Heart left ventricle (tissue), 16 donors: ENCODE measurements at regions of chr15 and their contacts with region 1.

Region 1: GRCh38 chr15:71448688-71449114 is 333.4 kb downstream of the THSD4 start:
- DNase-seq: peak in 2 of 5 donors; percentile 37 to 52
- ATAC-seq: peak; percentile 56 to 78 (median 64)
- H3K4me3 ChIP-seq: no peak overlapping the region
- H3K27ac ChIP-seq: peak overlapping the region in 11 of 12 donors; percentile 22 to 84 (median 57)
- H3K4me1 ChIP-seq: peaks cover 0 to 53% (median 12%) of the 10 kb centered on the region in 12 donors
- H3K27me3 ChIP-seq: no peaks in the 10 kb centered on the region
- CTCF ChIP-seq: peak; percentile 75 to 97 (median 92)
- POLR2A ChIP-seq: no peak

Region 2: DNA sequence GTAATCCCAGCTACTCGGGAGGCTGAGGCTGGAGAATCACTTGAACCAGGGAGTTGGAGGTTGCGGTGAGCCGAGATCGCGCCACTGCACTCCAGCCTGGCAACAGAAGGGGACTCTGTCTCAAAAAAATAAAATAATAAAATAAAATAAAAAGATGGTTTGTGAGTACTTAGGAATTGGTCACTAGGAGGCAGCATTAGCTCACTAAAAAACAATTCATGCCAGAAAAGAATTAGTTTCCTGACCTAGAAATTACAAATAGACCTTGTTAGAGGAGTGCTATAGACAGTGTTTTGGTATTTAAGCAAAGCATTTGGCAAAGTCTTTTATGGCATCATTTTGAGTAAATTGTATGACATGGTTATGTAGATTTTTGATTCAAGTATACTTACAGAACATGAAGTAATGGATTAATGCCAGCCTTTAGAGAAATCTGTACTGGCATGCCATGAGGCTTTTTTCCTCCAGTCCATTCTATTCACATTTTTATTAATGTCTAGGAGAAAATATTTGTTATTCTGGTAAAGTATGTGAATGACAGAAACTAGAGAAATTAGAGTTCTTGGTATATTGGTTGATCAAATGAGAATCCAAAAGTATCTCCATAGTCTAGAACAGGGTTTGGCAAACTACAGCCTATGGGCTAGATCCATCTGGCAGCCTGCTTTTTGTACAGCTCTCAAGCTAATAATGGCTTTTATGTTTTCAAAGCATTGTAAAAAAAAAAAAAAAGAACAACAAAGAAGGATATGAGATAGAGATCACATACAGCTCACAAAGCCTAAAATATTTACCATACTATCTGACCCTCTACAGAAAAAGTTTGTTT is 474.5 kb before region 1 on chr15:
- intact Hi-C with region 1: loop called in 1 of 10 experiments (anchors 10 kb)
- DNase-seq: no peak
- ATAC-seq: no peak
- H3K4me3 ChIP-seq: no peak overlapping the region
- H3K27ac ChIP-seq: no peak overlapping the region
- H3K4me1 ChIP-seq: no peaks in the 10 kb centered on the region
- H3K27me3 ChIP-seq: no peaks in the 10 kb centered on the region
- CTCF ChIP-seq: peak in 8 of 12 donors; percentile 6 to 45 (median 32)
- POLR2A ChIP-seq: no peak

Region 3: DNA sequence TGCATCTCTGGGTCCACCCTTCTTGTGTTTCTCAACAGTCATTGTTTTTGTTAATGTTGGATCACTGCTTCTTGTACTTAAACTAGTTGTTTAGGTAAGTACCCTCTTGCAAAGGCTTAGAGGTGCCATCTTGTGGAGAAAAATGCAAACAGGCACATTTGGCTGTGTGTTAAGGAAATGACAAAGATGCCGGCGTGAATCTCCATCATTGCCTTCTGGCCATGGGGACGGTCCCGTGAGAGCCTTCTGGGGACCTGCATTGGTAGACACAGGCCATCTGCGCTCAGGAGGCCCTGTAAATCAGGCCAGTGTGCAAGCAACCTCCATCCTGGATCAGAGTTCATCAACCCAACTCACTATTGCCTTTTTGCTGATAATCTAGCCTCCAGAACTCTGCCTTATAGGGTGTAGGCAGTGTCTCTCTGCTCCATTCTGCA is 203.1 kb after region 1 on chr15:
- intact Hi-C with region 1: loop called in 8 of 10 experiments (anchors 2 to 10 kb)
- DNase-seq: no peak
- ATAC-seq: peak in 1 of 4 donors; percentile 47
- H3K4me3 ChIP-seq: no peak overlapping the region
- H3K27ac ChIP-seq: peak overlapping the region in 1 of 12 donors; percentile 10
- H3K4me1 ChIP-seq: peaks cover 0 to 47% (median 13%) of the 10 kb centered on the region in 12 donors
- H3K27me3 ChIP-seq: no peaks in the 10 kb centered on the region
- CTCF ChIP-seq: peak in 10 of 12 donors; percentile 24 to 54 (median 41)
- POLR2A ChIP-seq: no peak

Region 4: DNA sequence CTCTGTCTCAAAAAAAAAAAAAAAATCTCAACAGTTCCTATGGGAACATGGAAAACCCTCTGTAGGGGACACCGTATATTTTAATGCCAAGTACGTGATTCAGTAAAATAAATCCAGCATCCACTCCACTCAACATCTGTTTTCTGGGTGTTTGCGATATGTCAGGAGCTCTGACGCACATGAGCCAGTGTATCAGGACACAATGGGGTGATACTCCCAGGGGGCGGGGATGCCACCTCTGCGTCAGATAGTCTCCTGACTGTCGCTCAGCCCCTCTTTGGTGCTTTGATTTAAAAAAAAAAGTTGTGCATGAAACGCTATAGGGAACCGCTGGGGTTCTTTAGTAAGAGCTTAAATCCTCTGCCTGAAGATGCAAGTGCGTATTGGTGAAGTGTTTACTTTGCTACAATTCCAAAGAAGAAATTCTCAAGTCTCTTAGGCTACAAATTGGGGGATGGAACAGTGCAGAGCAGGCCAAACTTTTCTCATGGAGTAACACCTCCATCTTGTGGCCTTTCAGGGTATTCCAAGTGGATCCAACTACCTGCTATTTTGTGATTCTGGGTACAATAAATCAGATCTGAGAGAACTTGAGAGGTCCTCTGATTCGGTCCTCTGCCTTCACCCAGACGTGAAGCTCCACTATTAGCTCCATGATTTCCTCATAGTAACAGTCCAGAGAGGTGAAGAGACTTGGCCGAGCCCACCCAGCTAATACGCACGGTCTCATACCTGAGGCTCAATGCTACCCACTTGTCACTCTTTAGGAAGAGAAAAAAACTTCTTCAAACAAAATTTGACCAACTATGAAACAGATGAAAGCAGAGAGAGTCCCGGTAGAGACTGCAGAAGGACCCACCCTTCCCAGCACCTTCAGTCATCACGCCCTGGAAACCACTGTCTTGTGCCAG is 352.4 kb after region 1 on chr15:
- intact Hi-C with region 1: loop called (anchors 2 to 10 kb)
- DNase-seq: no peak
- ATAC-seq: peak; percentile 57 to 84 (median 82)
- H3K4me3 ChIP-seq: no peak overlapping the region
- H3K27ac ChIP-seq: no peak overlapping the region
- H3K4me1 ChIP-seq: peaks cover 0 to 8% (median 2%) of the 10 kb centered on the region in 12 donors
- H3K27me3 ChIP-seq: no peaks in the 10 kb centered on the region
- CTCF ChIP-seq: peak; percentile 72 to 91 (median 84)
- POLR2A ChIP-seq: no peak